B cell (primary cell): ENCODE measurements at regions of chr18 and their contacts with region 1.

Region 1: DNA sequence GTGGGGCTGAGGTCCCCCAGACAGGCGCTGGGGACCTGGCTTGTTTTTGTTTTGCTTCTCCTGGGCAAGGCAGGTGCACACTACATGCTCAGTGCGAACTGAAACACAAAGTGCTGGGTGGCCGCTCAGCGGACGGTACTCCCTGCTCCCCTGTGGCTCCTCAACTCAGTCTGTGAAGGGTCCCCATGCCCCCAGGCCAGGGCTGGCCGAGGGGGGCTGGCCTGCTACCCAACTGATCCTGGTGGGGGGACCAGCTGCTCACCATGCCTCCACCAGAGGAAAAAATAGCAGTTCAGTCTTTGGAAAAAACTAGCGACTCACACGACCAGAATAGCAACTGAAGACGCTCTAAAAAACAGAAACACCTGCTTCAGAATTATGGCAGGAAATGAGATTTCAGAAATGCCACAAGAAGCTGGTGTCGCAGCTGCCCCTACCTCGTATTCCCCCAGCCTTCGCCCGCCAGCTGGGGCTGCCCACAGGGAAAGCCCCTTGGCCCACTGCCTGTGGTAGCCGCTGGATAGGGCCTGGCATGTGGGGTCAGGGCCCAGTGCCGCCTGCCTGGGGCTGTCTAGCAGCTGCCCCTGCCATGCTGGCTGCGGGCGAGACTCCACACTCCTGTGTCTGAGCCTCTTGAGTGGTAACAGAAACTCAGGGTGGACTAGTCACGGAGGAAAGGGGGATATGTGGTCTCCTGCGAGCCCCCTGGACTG is 43.7 kb downstream of the MEX3C start:
- DNase-seq: peak; percentile 81
- ATAC-seq: peak; percentile 71
- H3K4me3 ChIP-seq: peak overlapping the region; percentile 26 to 76 (median 57)
- H3K4me3 Mint-ChIP-seq: peak overlapping the region; percentile 92
- H3K27ac ChIP-seq: peak overlapping the region; percentile 95
- H3K27ac Mint-ChIP-seq: peak overlapping the region; percentile 100
- H3K4me1 ChIP-seq: peaks cover 28 to 41% of the 10 kb centered on the region in 2 donors
- H3K4me1 Mint-ChIP-seq: peaks cover 49% of the 10 kb centered on the region
- H3K27me3 ChIP-seq: no peaks in the 10 kb centered on the region
- H3K27me3 Mint-ChIP-seq: no peaks in the 10 kb centered on the region
- CTCF ChIP-seq: no peak

Region 2: GRCh38 chr18:50878345-50879301 is 275.2 kb before region 1 on chr18 and contains the start of gene ME2:
- CTCF ChIA-PET with region 1: no interaction called
- POLR2A ChIA-PET with region 1: interaction called, 3 read pairs
- intact Hi-C with region 1: loop called (anchors 5 kb)
- DNase-seq: peak; percentile 94
- ATAC-seq: peak; percentile 93
- H3K4me3 ChIP-seq: peak within 1 kb of the TSS; percentile 80 to 95 (median 90)
- H3K4me3 Mint-ChIP-seq: peak within 1 kb of the TSS; percentile 98
- H3K27ac ChIP-seq: peak within 1 kb of the TSS; percentile 96 to 98
- H3K27ac Mint-ChIP-seq: peak within 1 kb of the TSS; percentile 99
- H3K4me1 ChIP-seq: peaks cover 20 to 25% of the 10 kb centered on the region in 2 donors
- H3K4me1 Mint-ChIP-seq: peaks cover 30% of the 10 kb centered on the region
- H3K27me3 ChIP-seq: no peaks in the 10 kb centered on the region
- H3K27me3 Mint-ChIP-seq: peaks cover 3% of the 10 kb centered on the region
- CTCF ChIP-seq: no peak
- total RNA-seq, gene ME2: 55.4 and 57.8 TPM in 2 replicates

Region 3: DNA sequence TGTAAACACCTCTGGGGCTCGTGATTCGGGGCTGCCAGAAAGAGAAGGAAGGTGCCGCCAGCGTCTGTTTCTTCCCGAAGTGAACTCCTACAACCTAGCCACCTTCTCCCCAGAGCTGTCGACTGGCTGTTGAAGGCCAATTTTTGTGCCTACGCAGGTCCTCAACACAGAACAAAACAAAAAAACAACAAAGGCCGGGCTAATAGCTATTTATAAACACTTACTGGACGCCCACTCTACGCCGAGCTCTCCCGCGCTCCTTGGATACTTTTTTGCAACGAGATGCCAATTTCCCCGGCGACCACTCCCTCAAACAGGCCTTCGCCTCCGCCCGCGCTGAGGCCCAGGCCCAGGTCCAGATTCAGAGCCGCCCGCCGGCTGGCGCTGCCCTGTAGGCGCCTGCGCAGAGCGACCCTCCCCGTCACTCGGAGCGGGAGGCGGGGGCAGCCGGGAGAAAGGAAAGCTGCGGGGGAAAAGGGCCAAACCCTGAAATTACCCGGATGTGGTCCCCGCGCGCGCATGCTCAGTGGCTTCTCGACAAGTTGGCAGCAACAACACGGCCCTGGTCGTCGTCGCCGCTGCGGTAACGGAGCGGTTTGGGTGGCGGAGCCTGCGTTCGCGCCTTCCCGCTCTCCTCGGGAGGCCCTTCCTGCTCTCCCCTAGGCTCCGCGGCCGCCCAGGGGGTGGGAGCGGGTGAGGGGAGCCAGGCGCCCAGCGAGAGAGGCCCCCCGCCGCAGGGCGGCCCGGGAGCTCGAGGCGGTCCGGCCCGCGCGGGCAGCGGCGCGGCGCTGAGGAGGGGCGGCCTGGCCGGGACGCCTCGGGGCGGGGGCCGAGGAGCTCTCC is 123.9 kb before region 1 on chr18 and contains the start of gene SMAD4:
- CTCF ChIA-PET with region 1: no interaction called
- POLR2A ChIA-PET with region 1: interaction called, 4 read pairs
- intact Hi-C with region 1: loop called (anchors 2 kb)
- DNase-seq: peak; percentile 97
- ATAC-seq: peak; percentile 83
- H3K4me3 ChIP-seq: peak within 1 kb of the TSS; percentile 61 to 81 (median 74)
- H3K4me3 Mint-ChIP-seq: peak within 1 kb of the TSS; percentile 97
- H3K27ac ChIP-seq: peak within 1 kb of the TSS; percentile 78 to 84
- H3K27ac Mint-ChIP-seq: peak within 1 kb of the TSS; percentile 99
- H3K4me1 ChIP-seq: peaks cover 22 to 42% of the 10 kb centered on the region in 2 donors
- H3K4me1 Mint-ChIP-seq: peaks cover 53% of the 10 kb centered on the region
- H3K27me3 ChIP-seq: no peaks in the 10 kb centered on the region
- H3K27me3 Mint-ChIP-seq: no peaks in the 10 kb centered on the region
- CTCF ChIP-seq: no peak
- total RNA-seq, gene SMAD4: 136 and 146 TPM in 2 replicates

Region 4: GRCh38 chr18:51077217-51077616 is 76.6 kb before region 1 on chr18:
- CTCF ChIA-PET with region 1: no interaction called
- POLR2A ChIA-PET with region 1: no interaction called
- intact Hi-C with region 1: loop called (anchors 2 kb)
- DNase-seq: no peak
- ATAC-seq: no peak
- H3K4me3 ChIP-seq: no peak overlapping the region
- H3K4me3 Mint-ChIP-seq: no peak overlapping the region
- H3K27ac ChIP-seq: no peak overlapping the region
- H3K27ac Mint-ChIP-seq: no peak overlapping the region
- H3K4me1 ChIP-seq: peaks cover 17% of the 10 kb centered on the region in 2 donors
- H3K4me1 Mint-ChIP-seq: peaks cover 28% of the 10 kb centered on the region
- H3K27me3 ChIP-seq: no peaks in the 10 kb centered on the region
- H3K27me3 Mint-ChIP-seq: no peaks in the 10 kb centered on the region
- CTCF ChIP-seq: no peak

Region 5: GRCh38 chr18:51110073-51110803 is 43.6 kb before region 1 on chr18:
- CTCF ChIA-PET with region 1: interaction called, 6 read pairs
- POLR2A ChIA-PET with region 1: interaction called, 11 read pairs
- intact Hi-C with region 1: no loop called
- DNase-seq: peak; percentile 68
- ATAC-seq: peak; percentile 78
- H3K4me3 ChIP-seq: no peak overlapping the region
- H3K4me3 Mint-ChIP-seq: no peak overlapping the region
- H3K27ac ChIP-seq: no peak overlapping the region
- H3K27ac Mint-ChIP-seq: no peak overlapping the region
- H3K4me1 ChIP-seq: peaks cover 8 to 18% of the 10 kb centered on the region in 2 donors
- H3K4me1 Mint-ChIP-seq: peaks cover 9% of the 10 kb centered on the region
- H3K27me3 ChIP-seq: no peaks in the 10 kb centered on the region
- H3K27me3 Mint-ChIP-seq: no peaks in the 10 kb centered on the region
- CTCF ChIP-seq: peak; percentile 99

Region 6: DNA sequence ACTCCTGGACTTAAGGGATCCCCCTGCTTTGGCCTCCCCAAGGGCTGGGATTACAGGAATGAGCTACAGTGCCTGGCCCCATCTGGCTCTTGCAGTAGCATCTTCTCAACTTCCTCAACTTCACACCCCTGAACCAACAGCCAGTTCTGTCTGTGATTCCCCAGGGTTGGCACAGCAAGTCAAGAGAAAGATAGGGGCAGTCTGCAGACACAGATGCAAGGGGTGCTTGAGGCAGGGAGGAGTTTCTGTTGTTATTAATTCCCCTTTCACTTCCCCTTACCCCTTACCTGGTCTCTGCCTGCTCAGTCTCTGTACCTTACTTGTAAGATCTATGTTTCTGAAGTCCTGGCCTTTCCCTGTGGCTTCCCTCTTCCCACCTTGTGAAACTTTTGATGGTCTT is 97.8 kb after region 1 on chr18:
- CTCF ChIA-PET with region 1: interaction called, 5 read pairs
- POLR2A ChIA-PET with region 1: no interaction called
- intact Hi-C with region 1: loop called (anchors 2 kb)
- DNase-seq: peak; percentile 89
- ATAC-seq: peak; percentile 99
- H3K4me3 ChIP-seq: no peak overlapping the region
- H3K4me3 Mint-ChIP-seq: no peak overlapping the region
- H3K27ac ChIP-seq: peak overlapping the region in 1 of 2 donors; percentile 27
- H3K27ac Mint-ChIP-seq: peak overlapping the region; percentile 86
- H3K4me1 ChIP-seq: peaks cover 14 to 19% of the 10 kb centered on the region in 2 donors
- H3K4me1 Mint-ChIP-seq: peaks cover 21% of the 10 kb centered on the region
- H3K27me3 ChIP-seq: no peaks in the 10 kb centered on the region
- H3K27me3 Mint-ChIP-seq: peaks cover 3% of the 10 kb centered on the region
- CTCF ChIP-seq: no peak